Activated naive CD4-positive, alpha-beta T cell treated with anti-CD3 and anti-CD28 coated beads for 36 hours (primary cell): ENCODE measurements at regions of chr4 and their contacts with region 1.

Region 1: DNA sequence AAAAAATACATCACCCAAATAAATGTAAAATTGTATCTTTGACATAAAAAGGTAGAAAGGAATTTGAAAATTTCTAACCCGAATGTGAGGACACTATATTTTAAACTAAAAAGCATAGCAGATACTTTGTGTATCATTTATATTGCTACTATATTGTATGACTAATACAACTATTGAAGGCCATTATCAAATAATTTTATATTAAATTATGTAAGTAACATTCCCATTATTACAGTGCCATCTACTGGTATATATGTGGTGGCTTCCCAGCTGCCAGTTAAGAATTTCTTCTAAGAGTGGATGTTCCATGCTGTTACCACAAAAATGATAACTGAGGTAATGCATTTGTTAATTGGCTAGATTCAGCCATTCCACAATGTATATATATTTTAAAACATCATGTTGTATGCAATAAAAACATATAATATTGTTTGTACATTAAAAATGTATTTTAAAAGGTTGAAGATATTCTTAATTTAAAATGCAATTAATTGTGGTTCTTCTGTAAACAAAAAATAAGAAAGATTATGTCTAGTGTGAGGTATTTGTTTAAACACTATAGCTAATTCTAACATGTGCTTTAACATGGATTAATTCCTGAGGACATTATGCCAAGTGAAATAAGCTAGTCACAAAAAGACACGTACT is 65.3 kb downstream of the EGF start:
- DNase-seq: peak; percentile 13
- H3K4me3 Mint-ChIP-seq: no peak overlapping the region
- H3K27ac Mint-ChIP-seq: no peak overlapping the region
- H3K4me1 Mint-ChIP-seq: no peaks in the 10 kb centered on the region
- H3K27me3 Mint-ChIP-seq: peaks cover 7% of the 10 kb centered on the region

Region 2: GRCh38 chr4:109574102-109574850 is 403.7 kb before region 1 on chr4:
- CTCF ChIA-PET with region 1: no interaction called
- intact Hi-C with region 1: no loop called
- DNase-seq: peak; percentile 42
- H3K4me3 Mint-ChIP-seq: peak overlapping the region; percentile 39
- H3K27ac Mint-ChIP-seq: no peak overlapping the region
- H3K4me1 Mint-ChIP-seq: peaks cover 74% of the 10 kb centered on the region
- H3K27me3 Mint-ChIP-seq: no peaks in the 10 kb centered on the region

Region 3: GRCh38 chr4:109665783-109666485 is 312.0 kb before region 1 on chr4:
- CTCF ChIA-PET with region 1: no interaction called
- intact Hi-C with region 1: loop called (anchors 10 kb)
- DNase-seq: no peak
- H3K4me3 Mint-ChIP-seq: no peak overlapping the region
- H3K27ac Mint-ChIP-seq: no peak overlapping the region
- H3K4me1 Mint-ChIP-seq: peaks cover 64% of the 10 kb centered on the region
- H3K27me3 Mint-ChIP-seq: no peaks in the 10 kb centered on the region

Region 4: GRCh38 chr4:109826719-109827118 is 151.3 kb before region 1 on chr4:
- CTCF ChIA-PET with region 1: interaction called, 6 read pairs
- intact Hi-C with region 1: loop called (anchors 2 kb)
- DNase-seq: no peak
- H3K4me3 Mint-ChIP-seq: no peak overlapping the region
- H3K27ac Mint-ChIP-seq: no peak overlapping the region
- H3K4me1 Mint-ChIP-seq: peaks cover 5% of the 10 kb centered on the region
- H3K27me3 Mint-ChIP-seq: no peaks in the 10 kb centered on the region

Region 5: DNA sequence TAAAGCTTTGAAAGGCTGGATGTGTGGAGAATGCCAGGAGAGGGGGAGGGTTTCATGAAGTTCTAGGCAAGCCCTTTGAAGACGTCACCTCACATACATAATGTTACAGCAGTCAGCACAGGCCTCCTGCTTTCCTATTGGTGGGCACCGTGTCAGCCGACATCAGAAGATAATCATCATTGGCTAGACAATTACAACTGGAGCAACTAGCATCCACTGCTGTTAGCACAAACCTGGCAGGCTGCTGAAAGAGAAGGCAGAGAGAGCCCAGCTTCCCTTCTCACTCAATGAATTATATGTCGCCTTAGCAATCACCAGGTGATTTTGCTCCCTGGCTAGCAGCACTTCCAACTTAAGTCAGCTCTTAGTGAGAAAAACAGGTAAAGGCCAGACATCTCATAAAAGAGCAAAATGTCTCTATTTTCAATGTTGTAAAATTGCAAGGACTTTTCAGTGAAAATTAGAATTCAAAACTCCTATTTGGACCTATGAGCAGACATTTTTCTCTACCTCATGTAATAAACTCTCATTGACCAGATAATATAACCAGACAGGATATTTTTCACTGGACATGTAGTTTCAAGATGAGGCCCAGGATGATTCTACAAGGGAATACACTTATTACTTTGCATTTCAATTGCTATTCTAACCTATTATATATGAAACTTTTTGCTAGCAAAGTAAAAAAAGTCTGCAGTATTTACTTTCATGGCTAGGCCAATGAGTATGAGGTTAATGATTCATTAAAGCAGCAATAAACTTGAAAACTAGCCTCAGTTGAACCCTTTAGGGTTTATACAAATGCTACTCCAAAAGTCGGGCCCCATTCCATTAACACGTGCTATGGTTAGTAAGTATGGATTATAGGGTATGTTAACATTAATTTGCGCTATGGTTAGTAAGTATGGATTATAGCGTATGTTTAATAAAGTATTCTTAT is 216.1 kb after region 1 on chr4:
- CTCF ChIA-PET with region 1: no interaction called
- intact Hi-C with region 1: no loop called
- DNase-seq: peak; percentile 92
- H3K4me3 Mint-ChIP-seq: peak overlapping the region; percentile 54
- H3K27ac Mint-ChIP-seq: peak overlapping the region; percentile 95
- H3K4me1 Mint-ChIP-seq: peaks cover 31% of the 10 kb centered on the region
- H3K27me3 Mint-ChIP-seq: no peaks in the 10 kb centered on the region

Region 6: GRCh38 chr4:110361921-110362320 is 383.9 kb after region 1 on chr4:
- CTCF ChIA-PET with region 1: no interaction called
- intact Hi-C with region 1: no loop called
- DNase-seq: no peak
- H3K4me3 Mint-ChIP-seq: no peak overlapping the region
- H3K27ac Mint-ChIP-seq: no peak overlapping the region
- H3K4me1 Mint-ChIP-seq: no peaks in the 10 kb centered on the region
- H3K27me3 Mint-ChIP-seq: peaks cover 6% of the 10 kb centered on the region